ENCODE measurements at regions of chr7 and their contacts with region 1.

Region 1: DNA sequence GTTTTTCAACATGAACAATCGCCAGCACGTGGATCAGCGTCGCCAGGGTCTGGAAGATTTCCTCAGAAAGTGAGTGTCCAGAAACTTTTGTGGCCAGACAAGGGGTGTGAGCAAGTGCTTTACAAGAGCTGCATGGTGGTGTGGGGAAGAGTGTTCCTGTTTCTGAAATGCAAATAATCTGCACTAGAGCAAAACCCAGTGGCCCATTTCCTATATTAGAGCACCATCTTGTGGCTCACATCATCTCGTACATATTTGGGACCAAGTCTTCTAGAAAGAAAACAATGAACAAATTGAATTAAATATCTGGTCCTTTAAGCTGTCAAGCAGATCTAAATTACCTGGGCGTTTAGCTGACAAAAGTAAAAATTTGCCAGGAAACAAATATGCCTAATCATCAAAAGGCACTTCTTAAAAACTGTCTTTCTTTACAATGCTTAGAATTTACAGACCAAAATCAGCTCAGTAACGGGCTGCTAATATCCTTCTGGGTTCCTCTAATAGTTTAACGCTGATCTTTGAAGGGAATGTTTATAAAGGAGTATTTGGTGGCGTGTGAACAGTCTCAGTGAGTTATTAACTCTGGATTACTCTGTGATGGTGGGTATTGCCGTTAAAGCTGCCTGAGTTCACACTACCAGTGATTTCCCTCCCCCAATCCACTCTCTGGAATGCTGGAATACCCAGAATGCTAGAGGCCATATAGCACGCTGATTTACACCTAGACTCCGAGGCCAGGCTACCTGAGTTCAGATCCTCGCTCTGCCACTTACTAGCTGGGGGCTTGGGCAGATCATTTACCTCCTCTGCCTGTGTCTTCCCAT is 73.6 kb downstream of the SNX10 start:
- DNase-seq: peak; percentile 83
- ATAC-seq: peak; percentile 96
- H3K4me3 ChIP-seq: no peak overlapping the region
- H3K27ac ChIP-seq: peak overlapping the region; percentile 48; the same call in 1 of the 2 replicates
- H3K4me1 ChIP-seq: peaks cover 11% of the 10 kb centered on the region
- H3K27me3 ChIP-seq: no peaks in the 10 kb centered on the region
- CTCF ChIP-seq: peak; percentile 62 to 94 (median 64); a peak in 5 of 6 replicates
- EP300 ChIP-seq: no peak
- POLR2A ChIP-seq: no peak
- RAD21 ChIP-seq: peak; percentile 98

Region 2: DNA sequence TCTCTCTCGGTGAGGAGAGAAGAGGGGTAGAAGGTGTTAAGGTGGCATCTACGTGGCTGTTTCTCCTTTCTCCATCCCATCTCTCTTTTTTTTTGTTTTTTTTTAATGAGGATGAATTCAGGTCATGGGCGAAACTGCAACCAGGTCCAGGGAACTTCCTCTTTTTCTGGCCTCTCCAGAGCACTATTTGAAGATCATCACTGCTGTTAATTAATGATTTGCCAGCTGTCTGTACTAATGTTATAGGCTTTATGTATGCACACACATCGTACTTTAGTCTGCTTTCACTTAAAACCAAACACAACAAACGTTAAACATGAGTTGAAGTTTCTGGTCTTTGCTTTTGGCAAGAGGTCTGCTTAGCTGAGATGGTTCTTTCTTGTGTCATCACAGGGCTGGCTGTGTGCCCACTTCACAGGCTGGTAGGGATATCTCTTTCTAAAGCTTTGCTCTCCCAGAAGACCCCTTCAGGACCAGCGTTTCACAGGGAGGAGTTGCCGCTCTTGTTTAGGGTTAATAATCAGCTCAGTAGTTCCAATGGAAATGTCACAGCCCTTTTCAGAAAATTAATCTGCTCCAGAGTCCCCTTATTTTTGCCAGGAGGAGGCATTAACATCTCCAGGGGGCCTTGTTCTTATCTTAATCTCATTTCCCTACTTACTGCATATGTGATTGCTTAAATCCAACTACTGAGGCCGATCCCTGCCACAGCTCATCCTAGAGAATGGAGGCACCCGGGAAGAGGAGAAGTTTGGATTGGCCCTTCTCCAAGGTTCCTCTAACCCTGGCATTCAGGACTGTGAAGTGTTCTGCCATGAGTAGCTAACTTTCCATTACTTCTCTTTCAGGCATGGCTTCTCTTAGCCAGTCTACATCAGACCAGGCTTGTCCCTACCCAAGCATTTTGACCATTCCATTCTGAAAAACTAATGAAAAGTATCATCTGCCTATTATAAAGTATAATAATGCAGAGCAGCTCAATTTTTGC is 487.2 kb before region 1 on chr7:
- CTCF ChIA-PET with region 1: interaction called, 14 read pairs
- POLR2A ChIA-PET with region 1: no interaction called
- RAD21 ChIA-PET with region 1: interaction called, 3 read pairs
- SMC1A ChIA-PET with region 1: interaction called, 3 read pairs
- in situ Hi-C with region 1: no loop called
- intact Hi-C with region 1: no loop called
- DNase-seq: no peak
- ATAC-seq: peak; percentile 93
- H3K4me3 ChIP-seq: no peak overlapping the region
- H3K27ac ChIP-seq: no peak overlapping the region
- H3K4me1 ChIP-seq: no peaks in the 10 kb centered on the region
- H3K27me3 ChIP-seq: peaks cover 0 to 2% of the 10 kb centered on the region in 2 experiments; a peak in 2 of 4 replicates
- CTCF ChIP-seq: no peak
- EP300 ChIP-seq: peak in 1 of 2 experiments; percentile 17; a peak in 1 of 4 replicates
- POLR2A ChIP-seq: no peak
- RAD21 ChIP-seq: no peak

Region 3: DNA sequence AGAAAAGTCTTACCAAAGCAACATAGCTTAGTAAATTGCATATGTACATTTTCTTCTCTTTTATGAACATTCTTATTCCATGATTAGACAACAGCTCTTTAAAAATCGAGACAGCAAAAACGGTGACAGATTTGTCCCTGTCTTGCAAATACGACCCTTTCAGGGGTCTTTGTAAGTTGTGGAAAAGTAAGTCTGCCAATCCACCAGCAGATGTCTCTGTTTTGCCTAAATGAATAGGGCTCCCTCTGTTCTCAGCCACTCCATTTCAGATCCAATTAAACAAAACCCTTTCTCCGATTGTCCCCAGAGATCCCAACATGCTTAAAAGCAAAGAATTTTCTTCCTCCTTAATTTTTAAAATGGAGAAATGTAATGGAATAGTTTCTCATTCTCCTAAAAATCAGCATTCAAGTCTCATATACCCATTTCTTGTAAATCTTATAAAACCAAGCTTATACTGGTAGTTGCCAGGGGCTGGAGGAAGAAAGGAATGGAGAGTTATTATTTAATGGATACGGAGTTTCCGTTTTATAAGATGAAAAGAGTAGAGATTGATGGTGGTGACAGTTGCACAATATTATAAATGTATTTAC is 274.3 kb before region 1 on chr7:
- CTCF ChIA-PET with region 1: interaction called, 132 read pairs
- POLR2A ChIA-PET with region 1: interaction called, 5 read pairs
- RAD21 ChIA-PET with region 1: interaction called, 51 read pairs
- SMC1A ChIA-PET with region 1: interaction called, 124 read pairs
- in situ Hi-C with region 1: loop called (anchors 5 kb)
- intact Hi-C with region 1: loop called (anchors 1 kb)
- DNase-seq: peak; percentile 30
- ATAC-seq: peak; percentile 87
- H3K4me3 ChIP-seq: no peak overlapping the region
- H3K27ac ChIP-seq: no peak overlapping the region
- H3K4me1 ChIP-seq: no peaks in the 10 kb centered on the region
- H3K27me3 ChIP-seq: no peaks in the 10 kb centered on the region
- CTCF ChIP-seq: peak; percentile 63 to 73 (median 65)
- EP300 ChIP-seq: no peak
- POLR2A ChIP-seq: no peak
- RAD21 ChIP-seq: peak; percentile 83

Region 4: DNA sequence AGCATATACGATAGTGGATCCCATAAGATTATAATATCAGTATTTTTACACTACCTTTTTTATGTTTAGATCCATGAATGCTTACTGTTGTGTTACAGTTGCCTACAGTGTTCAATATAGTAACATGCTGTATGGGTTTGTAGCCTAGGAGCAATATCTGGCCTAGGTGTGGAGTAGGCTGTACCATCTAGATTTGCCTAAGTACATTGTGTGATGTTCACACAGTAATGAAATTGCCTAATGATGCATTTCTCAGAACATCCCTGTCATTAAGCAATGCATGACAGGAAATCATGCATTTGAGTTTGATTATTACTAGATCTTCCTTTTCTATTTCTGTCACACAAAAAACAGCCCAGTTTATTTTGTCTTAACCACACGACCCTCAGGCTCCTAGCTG is 149.2 kb before region 1 on chr7:
- CTCF ChIA-PET with region 1: interaction called, 10 read pairs
- POLR2A ChIA-PET with region 1: no interaction called
- RAD21 ChIA-PET with region 1: no interaction called
- SMC1A ChIA-PET with region 1: interaction called, 3 read pairs
- in situ Hi-C with region 1: no loop called
- intact Hi-C with region 1: no loop called
- DNase-seq: no peak
- ATAC-seq: peak; percentile 35; the same call in 2 of the 3 replicates
- H3K4me3 ChIP-seq: no peak overlapping the region
- H3K27ac ChIP-seq: no peak overlapping the region
- H3K4me1 ChIP-seq: no peaks in the 10 kb centered on the region
- H3K27me3 ChIP-seq: no peaks in the 10 kb centered on the region; a peak in 1 of 4 replicates
- CTCF ChIP-seq: no peak
- EP300 ChIP-seq: no peak
- POLR2A ChIP-seq: no peak
- RAD21 ChIP-seq: no peak

Region 5: GRCh38 chr7:26337232-26337865 is 27.9 kb before region 1 on chr7:
- CTCF ChIA-PET with region 1: interaction called, 13 read pairs
- POLR2A ChIA-PET with region 1: no interaction called
- RAD21 ChIA-PET with region 1: interaction called, 6 read pairs
- SMC1A ChIA-PET with region 1: interaction called, 5 read pairs
- in situ Hi-C with region 1: no loop called
- intact Hi-C with region 1: no loop called
- DNase-seq: no peak
- ATAC-seq: peak; percentile 76
- H3K4me3 ChIP-seq: peak overlapping the region; percentile 23; the same call in 1 of the 2 replicates
- H3K27ac ChIP-seq: no peak overlapping the region
- H3K4me1 ChIP-seq: peaks cover 35% of the 10 kb centered on the region
- H3K27me3 ChIP-seq: no peaks in the 10 kb centered on the region
- CTCF ChIP-seq: no peak
- EP300 ChIP-seq: no peak
- POLR2A ChIP-seq: no peak
- RAD21 ChIP-seq: no peak

Region 6: DNA sequence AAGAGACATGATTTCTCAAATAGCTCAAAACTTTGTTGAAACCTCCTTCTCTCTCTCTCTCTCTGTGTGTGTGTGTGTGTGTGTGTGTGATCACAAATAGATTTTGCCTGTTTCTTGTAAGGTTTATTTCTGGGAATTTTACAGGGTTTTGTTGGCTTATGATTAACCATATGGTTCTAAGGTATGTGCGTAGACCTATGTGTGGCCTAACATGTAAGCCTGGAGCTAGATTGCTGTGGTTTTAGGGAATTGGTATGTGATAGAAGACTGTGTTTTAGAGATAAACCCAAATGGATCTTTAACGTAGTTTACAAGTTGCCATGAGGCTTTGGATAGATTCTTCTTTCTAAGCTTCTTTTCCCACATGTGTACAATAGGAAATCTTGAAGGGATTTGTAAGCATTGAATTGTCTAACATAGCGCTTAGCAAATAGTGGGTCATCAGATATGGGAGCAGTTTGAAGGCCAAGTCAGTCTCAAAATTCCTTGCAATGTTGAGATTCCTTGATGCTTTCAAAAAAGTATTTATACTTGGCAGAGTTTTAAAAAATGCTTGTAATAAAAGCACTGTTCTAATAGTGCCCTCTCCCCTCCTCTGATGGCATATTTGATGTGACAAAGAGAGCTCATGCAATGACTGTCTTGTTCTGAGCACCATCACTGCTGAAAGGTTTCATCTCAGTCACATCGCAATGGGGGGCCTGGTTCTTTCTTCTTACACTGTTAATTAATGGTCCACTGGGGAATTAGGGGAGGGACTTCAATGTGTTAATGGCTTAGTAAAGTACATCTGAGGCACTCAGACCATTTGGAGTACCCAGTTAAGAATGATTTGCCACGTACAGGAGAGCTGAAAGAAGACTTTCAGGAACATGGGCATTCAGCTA is 44.6 kb after region 1 on chr7:
- CTCF ChIA-PET with region 1: interaction called, 13 read pairs
- POLR2A ChIA-PET with region 1: no interaction called
- RAD21 ChIA-PET with region 1: no interaction called
- SMC1A ChIA-PET with region 1: interaction called, 5 read pairs
- in situ Hi-C with region 1: no loop called
- intact Hi-C with region 1: no loop called
- DNase-seq: no peak
- ATAC-seq: no peak
- H3K4me3 ChIP-seq: no peak overlapping the region
- H3K27ac ChIP-seq: no peak overlapping the region
- H3K4me1 ChIP-seq: no peaks in the 10 kb centered on the region
- H3K27me3 ChIP-seq: peaks cover 2 to 3% of the 10 kb centered on the region in 2 experiments; a peak in 2 of 4 replicates
- CTCF ChIP-seq: no peak
- EP300 ChIP-seq: no peak
- POLR2A ChIP-seq: no peak
- RAD21 ChIP-seq: no peak

Region 7: GRCh38 chr7:26686448-26686981 is 321.2 kb after region 1 on chr7:
- CTCF ChIA-PET with region 1: interaction called, 9 read pairs
- POLR2A ChIA-PET with region 1: no interaction called
- RAD21 ChIA-PET with region 1: interaction called, 10 read pairs
- SMC1A ChIA-PET with region 1: interaction called, 15 read pairs
- in situ Hi-C with region 1: no loop called
- intact Hi-C with region 1: no loop called
- DNase-seq: no peak
- ATAC-seq: peak; percentile 56
- H3K4me3 ChIP-seq: no peak overlapping the region
- H3K27ac ChIP-seq: no peak overlapping the region
- H3K4me1 ChIP-seq: peaks cover 14% of the 10 kb centered on the region; the same call in 1 of the 2 replicates
- H3K27me3 ChIP-seq: no peaks in the 10 kb centered on the region
- CTCF ChIP-seq: peak; percentile 32 to 48 (median 45); a peak in 5 of 6 replicates
- EP300 ChIP-seq: no peak
- POLR2A ChIP-seq: no peak
- RAD21 ChIP-seq: peak; percentile 63

Region 8: DNA sequence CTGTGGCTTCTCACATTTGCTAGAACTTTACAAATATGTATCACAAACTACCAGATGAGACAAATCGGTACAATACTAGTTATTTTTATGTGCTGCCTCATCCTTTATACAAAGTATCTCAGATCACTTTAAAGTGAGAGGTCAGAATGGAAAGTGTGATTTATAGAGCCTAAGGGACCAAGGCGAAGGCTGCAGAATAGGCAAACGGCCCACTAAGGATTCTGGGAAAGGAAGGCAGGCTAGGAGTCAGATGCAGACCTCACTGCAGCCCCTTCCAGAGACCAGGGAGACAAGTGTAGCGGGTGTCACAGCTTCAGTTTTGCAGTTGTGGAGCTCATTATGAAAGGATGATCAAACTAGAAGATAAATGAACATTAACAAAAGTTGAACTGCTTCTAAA is 1106.8 kb after region 1 on chr7:
- CTCF ChIA-PET with region 1: no interaction called
- POLR2A ChIA-PET with region 1: no interaction called
- RAD21 ChIA-PET with region 1: no interaction called
- SMC1A ChIA-PET with region 1: no interaction called
- in situ Hi-C with region 1: no loop called
- intact Hi-C with region 1: no loop called
- DNase-seq: no peak
- ATAC-seq: no peak
- H3K4me3 ChIP-seq: no peak overlapping the region
- H3K27ac ChIP-seq: no peak overlapping the region
- H3K4me1 ChIP-seq: no peaks in the 10 kb centered on the region
- H3K27me3 ChIP-seq: 0 out of 4 replicates have a peak, but pooled peaks cover 0 to 1% of the 10 kb centered on the region in 2 experiments
- CTCF ChIP-seq: no peak
- EP300 ChIP-seq: no peak
- POLR2A ChIP-seq: no peak
- RAD21 ChIP-seq: no peak